BJ (cell line): ENCODE measurements at regions of chr17 and their contacts with region 1.

Region 1: GRCh38 chr17:45277216-45277849 is 15.4 kb upstream of the SPATA32 start:
- DNase-seq: no peak
- H3K4me3 ChIP-seq: no peak overlapping the region
- H3K27me3 ChIP-seq: no peaks in the 10 kb centered on the region
- CTCF ChIP-seq: peak; percentile 82

Region 2: GRCh38 chr17:45260204-45260783 is 17.0 kb before region 1 on chr17:
- CTCF ChIA-PET with region 1: interaction called, 35 read pairs
- POLR2A ChIA-PET with region 1: no interaction called
- DNase-seq: no peak
- H3K4me3 ChIP-seq: no peak overlapping the region
- H3K27me3 ChIP-seq: no peaks in the 10 kb centered on the region
- CTCF ChIP-seq: no peak

Region 3: DNA sequence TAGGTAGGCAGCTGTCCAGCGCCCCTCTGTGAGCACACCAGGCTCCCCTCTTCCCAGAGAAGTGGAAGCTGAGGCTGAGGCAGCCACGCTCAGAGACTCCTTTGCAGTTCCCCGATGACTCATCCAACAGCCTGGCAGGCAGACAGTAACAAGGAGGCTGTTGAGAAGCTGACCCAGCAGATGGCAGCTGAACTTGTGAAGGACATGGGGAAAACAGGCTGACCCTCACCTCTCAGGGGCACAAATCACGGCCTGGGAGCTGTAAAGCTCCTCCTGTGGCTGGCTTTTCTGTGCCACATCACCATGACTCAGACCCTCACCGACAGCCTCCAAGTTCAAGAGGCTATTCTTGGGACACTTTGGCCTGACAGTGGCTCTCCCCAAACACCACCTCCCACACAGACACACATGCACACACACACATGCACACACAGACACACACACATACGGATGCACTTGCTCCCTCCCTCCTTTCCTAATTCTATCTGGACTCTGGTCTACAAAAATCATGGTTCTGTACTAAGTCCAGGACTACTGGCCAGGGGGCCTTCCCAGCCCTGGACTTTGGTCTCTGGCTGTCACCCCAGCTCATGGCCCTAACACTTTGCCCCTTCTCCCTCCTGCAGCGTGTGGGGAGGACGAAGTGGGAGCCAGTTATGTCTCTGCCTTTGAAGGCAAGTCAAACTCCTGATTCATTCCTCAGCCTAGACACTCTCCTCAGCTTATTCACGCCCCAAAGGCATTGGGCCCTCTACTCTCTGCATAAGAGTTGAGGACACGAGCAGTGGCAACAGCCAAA is 16.3 kb after region 1 on chr17:
- CTCF ChIA-PET with region 1: interaction called, 40 read pairs
- POLR2A ChIA-PET with region 1: no interaction called
- DNase-seq: no peak
- H3K4me3 ChIP-seq: no peak overlapping the region
- H3K27me3 ChIP-seq: no peaks in the 10 kb centered on the region
- CTCF ChIP-seq: peak; percentile 26; the same call in 1 of the 2 replicates

Region 4: DNA sequence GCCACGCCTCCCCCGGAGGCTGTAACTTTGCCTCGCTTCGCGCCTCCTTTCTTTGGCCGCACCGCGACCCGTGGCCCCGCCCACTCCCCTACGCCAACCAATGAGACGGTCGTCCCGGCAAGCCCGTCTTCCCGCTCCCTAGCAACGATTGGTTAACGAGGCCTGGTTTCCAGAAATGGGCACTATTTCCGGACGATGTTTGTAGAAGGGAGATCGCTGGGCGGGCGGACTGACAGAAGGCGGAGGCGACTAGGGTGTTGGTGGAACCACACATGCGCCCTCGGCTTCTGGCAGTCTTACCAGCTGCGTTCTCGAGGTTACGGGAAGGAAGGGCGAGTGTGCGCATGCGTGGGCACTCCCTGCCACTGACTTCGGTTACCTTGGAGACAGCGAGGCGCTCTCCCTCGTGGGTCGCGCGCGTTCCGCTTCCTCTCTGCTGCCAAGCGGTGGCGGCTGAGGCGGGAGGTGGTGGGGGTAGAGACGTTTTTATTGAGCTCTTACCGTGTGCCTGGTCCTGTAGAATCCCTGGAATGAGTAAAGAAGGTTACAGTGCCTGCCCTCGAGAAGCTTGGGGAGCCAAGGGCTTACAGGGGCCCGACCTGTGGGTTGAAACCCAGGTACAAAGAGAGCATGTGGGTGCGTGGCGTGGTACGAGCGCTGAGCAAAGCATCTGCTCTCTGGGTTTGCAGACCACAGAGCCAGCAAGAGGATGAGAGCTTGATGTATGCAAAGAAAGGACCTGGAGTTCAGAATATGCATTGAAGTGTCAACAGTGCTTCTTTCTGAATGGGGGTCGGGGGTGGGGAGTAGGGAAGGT is 40.0 kb after region 1 on chr17:
- CTCF ChIA-PET with region 1: interaction called, 28 read pairs
- POLR2A ChIA-PET with region 1: no interaction called
- DNase-seq: peak; percentile 100
- H3K4me3 ChIP-seq: peak overlapping the region; percentile 40
- H3K27me3 ChIP-seq: no peaks in the 10 kb centered on the region
- CTCF ChIP-seq: 0 out of 2 replicates have a peak, but pooled peaks have one; percentile 16